HCT116 (cell line): ENCODE measurements at regions of chrX and their contacts with region 1.

Region 1: DNA sequence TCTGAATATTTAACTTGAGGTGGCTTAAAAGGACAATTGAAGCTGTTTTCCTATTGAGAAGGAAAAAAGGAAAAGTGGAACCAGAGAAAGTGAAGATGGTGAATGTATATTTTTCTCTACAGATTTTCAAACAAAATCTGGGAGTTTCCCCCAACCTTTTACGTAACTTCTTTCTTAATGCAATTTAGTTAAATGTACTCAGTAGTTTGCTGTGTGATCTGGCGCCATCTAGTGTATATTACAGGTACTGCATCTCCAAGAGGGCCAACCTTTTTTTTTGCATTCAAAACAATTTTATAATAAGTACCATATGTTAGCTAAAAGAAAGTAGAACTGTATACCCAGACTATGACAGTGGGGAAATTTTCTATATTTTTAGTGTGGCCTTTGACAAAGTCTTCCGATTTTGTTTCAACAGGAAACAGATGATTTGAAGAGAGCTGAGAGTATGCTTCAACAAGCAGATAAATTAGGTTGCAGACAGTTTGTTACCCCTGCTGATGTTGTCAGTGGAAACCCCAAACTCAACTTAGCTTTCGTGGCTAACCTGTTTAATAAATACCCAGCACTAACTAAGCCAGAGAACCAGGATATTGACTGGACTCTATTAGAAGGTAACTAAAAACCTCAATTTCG is 82.0 kb downstream of the PLS3 start:
- DNase-seq: peak; percentile 15
- ATAC-seq: no peak
- H3K4me3 ChIP-seq: no peak overlapping the region
- H3K27ac ChIP-seq: no peak overlapping the region
- H3K4me1 ChIP-seq: no peaks in the 10 kb centered on the region
- H3K27me3 ChIP-seq: no peaks in the 10 kb centered on the region
- CTCF ChIP-seq: peak; percentile 48 to 74 (median 69); a peak in 5 of 6 replicates
- POLR2A ChIP-seq: no peak
- RAD21 ChIP-seq: peak; percentile 74

Region 2: GRCh38 chrX:115226929-115227328 is 416.1 kb before region 1 on chrX:
- CTCF ChIA-PET with region 1: interaction called, 5 read pairs
- POLR2A ChIA-PET with region 1: no interaction called
- RAD21 ChIA-PET with region 1: no interaction called
- intact Hi-C with region 1: loop called (anchors 2 kb)
- DNase-seq: peak; percentile 34
- ATAC-seq: peak; percentile 99
- H3K4me3 ChIP-seq: no peak overlapping the region
- H3K27ac ChIP-seq: no peak overlapping the region
- H3K4me1 ChIP-seq: no peaks in the 10 kb centered on the region
- H3K27me3 ChIP-seq: no peaks in the 10 kb centered on the region
- CTCF ChIP-seq: peak; percentile 58 to 88 (median 59)
- POLR2A ChIP-seq: no peak
- RAD21 ChIP-seq: peak; percentile 69

Region 3: GRCh38 chrX:115330498-115331168 is 312.4 kb before region 1 on chrX:
- CTCF ChIA-PET with region 1: interaction called, 13 read pairs
- POLR2A ChIA-PET with region 1: no interaction called
- RAD21 ChIA-PET with region 1: interaction called in 1 of 2 experiments, 3 read pairs
- intact Hi-C with region 1: loop called (anchors 1 kb)
- DNase-seq: peak; percentile 44
- ATAC-seq: peak; percentile 80
- H3K4me3 ChIP-seq: no peak overlapping the region
- H3K27ac ChIP-seq: no peak overlapping the region
- H3K4me1 ChIP-seq: no peaks in the 10 kb centered on the region; a peak in 1 of 4 replicates
- H3K27me3 ChIP-seq: no peaks in the 10 kb centered on the region
- CTCF ChIP-seq: peak; percentile 49 to 65 (median 62); a peak in 5 of 6 replicates
- POLR2A ChIP-seq: no peak
- RAD21 ChIP-seq: peak; percentile 80

Region 4: GRCh38 chrX:115388879-115389278 is 254.1 kb before region 1 on chrX:
- CTCF ChIA-PET with region 1: no interaction called
- POLR2A ChIA-PET with region 1: no interaction called
- RAD21 ChIA-PET with region 1: no interaction called
- intact Hi-C with region 1: no loop called
- DNase-seq: no peak
- ATAC-seq: no peak
- H3K4me3 ChIP-seq: no peak overlapping the region
- H3K27ac ChIP-seq: no peak overlapping the region
- H3K4me1 ChIP-seq: no peaks in the 10 kb centered on the region
- H3K27me3 ChIP-seq: no peaks in the 10 kb centered on the region
- CTCF ChIP-seq: no peak
- POLR2A ChIP-seq: no peak
- RAD21 ChIP-seq: no peak